ENCODE measurements at regions of chr7 and their contacts with region 1.

Region 1: GRCh38 chr7:130896898-130897514 is 163.0 kb upstream of the KLF14 start:
- DNase-seq: peak; percentile 64 to 87 (median 80)
- H3K4me3 ChIP-seq: peak overlapping the region in 2 of 59 donors; percentile 23 to 33
- H3K27ac ChIP-seq: peak overlapping the region in 55 of 59 donors; percentile 12 to 95 (median 76)
- H3K27me3 ChIP-seq: no peaks in the 10 kb centered on the region
- CTCF ChIP-seq: peak; percentile 69 to 97 (median 92)

Region 2: GRCh38 chr7:130632111-130632510 is 264.9 kb before region 1 on chr7:
- intact Hi-C with region 1: no loop called
- DNase-seq: no peak
- H3K4me3 ChIP-seq: no peak overlapping the region
- H3K27ac ChIP-seq: no peak overlapping the region
- H3K27me3 ChIP-seq: no peaks in the 10 kb centered on the region
- CTCF ChIP-seq: no peak

Region 3: GRCh38 chr7:131007394-131008330 is 110.7 kb after region 1 on chr7:
- intact Hi-C with region 1: loop called (anchors 1 to 2 kb)
- DNase-seq: peak in 8 of 10 donors; percentile 40 to 69 (median 58)
- H3K4me3 ChIP-seq: peak overlapping the region in 23 of 59 donors; percentile 2 to 37 (median 17)
- H3K27ac ChIP-seq: peak overlapping the region in 56 of 59 donors; percentile 4 to 84 (median 66)
- H3K27me3 ChIP-seq: no peaks in the 10 kb centered on the region
- CTCF ChIP-seq: peak; percentile 19 to 80 (median 60)

Region 4: DNA sequence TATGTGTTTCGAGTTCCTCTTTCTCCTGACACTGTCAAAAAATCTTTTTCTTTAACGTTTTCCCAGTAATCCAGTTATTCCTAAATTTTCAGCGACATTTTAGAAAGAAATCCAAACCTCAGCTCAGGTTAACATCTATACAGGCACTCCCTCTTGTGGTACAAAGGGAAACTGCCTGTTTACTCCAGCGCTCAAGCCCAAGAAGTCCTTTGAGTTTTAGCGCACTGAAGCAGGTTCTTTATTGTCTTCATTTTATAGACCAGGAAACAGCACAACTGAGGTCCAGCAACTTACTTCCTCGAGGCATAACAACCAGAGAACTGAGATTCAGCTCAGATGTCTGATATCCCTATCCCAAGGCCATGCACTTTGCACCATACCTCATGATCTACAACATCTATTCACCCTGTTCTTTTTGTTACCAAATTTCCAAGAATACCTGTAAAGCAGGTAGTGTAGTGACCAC is 143.5 kb after region 1 on chr7:
- intact Hi-C with region 1: loop called (anchors 1 to 10 kb)
- DNase-seq: peak in 4 of 10 donors; percentile 35 to 55 (median 50)
- H3K4me3 ChIP-seq: peak overlapping the region in 31 of 59 donors; percentile 1 to 43 (median 19)
- H3K27ac ChIP-seq: peak overlapping the region in 49 of 59 donors; percentile 3 to 80 (median 51)
- H3K27me3 ChIP-seq: no peaks in the 10 kb centered on the region
- CTCF ChIP-seq: peak; percentile 78 to 96 (median 90)

Region 5: GRCh38 chr7:131507592-131508331 is 610.8 kb after region 1 on chr7:
- intact Hi-C with region 1: loop called (anchors 5 to 10 kb)
- DNase-seq: peak; percentile 83 to 93 (median 88)
- H3K4me3 ChIP-seq: peak overlapping the region in 22 of 59 donors; percentile 6 to 39 (median 24)
- H3K27ac ChIP-seq: peak overlapping the region in 15 of 59 donors; percentile 2 to 75 (median 14)
- H3K27me3 ChIP-seq: no peaks in the 10 kb centered on the region
- CTCF ChIP-seq: peak; percentile 79 to 98 (median 95)

Measured in dorsolateral prefrontal cortex (tissue), 120 donors.